Activated CD4-positive, alpha-beta memory T cell treated with anti-CD3 and anti-CD28 coated beads, Interleukin-2, amount 10 ng/mL, durations not matched to agents 7 days and 5 days (primary cell): ENCODE measurements at regions of chr1 and their contacts with region 1.

Region 1: DNA sequence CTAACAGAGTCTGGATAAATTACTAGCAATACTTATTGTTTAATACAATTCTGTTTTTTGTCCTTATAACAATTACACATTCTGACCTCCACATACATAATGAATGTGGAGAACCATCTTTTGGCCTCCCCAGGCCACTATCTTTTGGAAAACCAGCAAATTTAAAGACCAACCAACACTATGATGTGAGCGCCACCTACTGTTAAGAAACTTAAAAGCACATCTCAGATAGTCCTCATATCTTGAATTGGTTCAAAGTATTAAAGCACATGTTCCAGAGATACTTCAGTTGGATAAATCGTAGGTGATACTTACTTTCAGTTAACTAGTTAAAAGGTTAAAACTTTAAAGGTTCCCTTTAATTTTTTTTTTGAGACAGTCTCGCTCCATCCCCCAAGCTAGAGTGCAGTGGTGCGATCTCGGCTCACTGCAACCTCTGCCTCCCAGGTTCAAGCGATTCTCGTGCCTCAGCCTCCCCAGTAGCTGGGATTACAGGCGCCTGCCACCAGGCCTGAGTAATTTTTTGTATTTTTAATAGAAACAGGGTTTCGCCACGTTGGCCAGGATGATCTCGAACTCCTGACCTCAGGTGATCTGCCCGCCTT is 29.3 kb upstream of the USP1 start:
- DNase-seq: no peak
- H3K4me3 Mint-ChIP-seq: no peak overlapping the region
- H3K27ac Mint-ChIP-seq: no peak overlapping the region
- H3K4me1 Mint-ChIP-seq: no peaks in the 10 kb centered on the region
- H3K27me3 Mint-ChIP-seq: peaks cover 2% of the 10 kb centered on the region

Region 2: DNA sequence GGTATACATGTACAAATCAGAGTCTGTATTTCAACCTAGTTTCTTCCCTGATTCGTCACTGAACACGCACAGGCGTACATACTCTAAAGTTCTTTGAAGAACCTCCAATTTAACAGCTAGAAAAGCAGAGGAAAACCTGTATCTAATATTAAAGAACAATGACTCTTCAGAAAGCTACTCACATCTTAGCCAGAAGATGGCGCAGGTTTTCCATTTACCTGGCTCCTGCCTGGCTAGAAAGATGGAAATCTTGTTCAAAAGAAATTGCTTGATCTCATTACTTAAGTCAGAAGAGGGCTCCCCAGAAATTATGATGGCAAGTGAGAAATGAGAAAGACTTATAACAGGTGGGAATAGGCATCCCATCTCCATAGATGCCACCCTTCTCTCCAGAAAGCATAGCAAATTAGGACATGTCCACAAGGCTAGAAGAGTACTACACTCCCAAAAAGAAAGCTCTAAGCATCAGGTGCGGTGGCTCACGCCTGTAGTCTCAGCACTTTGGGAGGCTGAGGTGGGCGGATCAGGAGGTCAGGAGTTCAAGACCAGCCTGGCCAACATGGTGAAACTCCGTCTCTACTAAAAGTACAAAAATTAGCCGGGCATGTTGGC is 231.8 kb before region 1 on chr1:
- CTCF ChIA-PET with region 1: interaction called, 40 read pairs
- POLR2A ChIA-PET with region 1: no interaction called
- DNase-seq: peak; percentile 28
- H3K4me3 Mint-ChIP-seq: no peak overlapping the region
- H3K27ac Mint-ChIP-seq: no peak overlapping the region
- H3K4me1 Mint-ChIP-seq: no peaks in the 10 kb centered on the region
- H3K27me3 Mint-ChIP-seq: peaks cover 3% of the 10 kb centered on the region

Region 3: GRCh38 chr1:62637392-62638105 is 230.0 kb after region 1 on chr1:
- CTCF ChIA-PET with region 1: no interaction called
- POLR2A ChIA-PET with region 1: no interaction called
- DNase-seq: no peak
- H3K4me3 Mint-ChIP-seq: no peak overlapping the region
- H3K27ac Mint-ChIP-seq: no peak overlapping the region
- H3K4me1 Mint-ChIP-seq: no peaks in the 10 kb centered on the region
- H3K27me3 Mint-ChIP-seq: no peaks in the 10 kb centered on the region